MCF 10A (cell line): ENCODE measurements at regions of chr16 and their contacts with region 1.

Region 1: DNA sequence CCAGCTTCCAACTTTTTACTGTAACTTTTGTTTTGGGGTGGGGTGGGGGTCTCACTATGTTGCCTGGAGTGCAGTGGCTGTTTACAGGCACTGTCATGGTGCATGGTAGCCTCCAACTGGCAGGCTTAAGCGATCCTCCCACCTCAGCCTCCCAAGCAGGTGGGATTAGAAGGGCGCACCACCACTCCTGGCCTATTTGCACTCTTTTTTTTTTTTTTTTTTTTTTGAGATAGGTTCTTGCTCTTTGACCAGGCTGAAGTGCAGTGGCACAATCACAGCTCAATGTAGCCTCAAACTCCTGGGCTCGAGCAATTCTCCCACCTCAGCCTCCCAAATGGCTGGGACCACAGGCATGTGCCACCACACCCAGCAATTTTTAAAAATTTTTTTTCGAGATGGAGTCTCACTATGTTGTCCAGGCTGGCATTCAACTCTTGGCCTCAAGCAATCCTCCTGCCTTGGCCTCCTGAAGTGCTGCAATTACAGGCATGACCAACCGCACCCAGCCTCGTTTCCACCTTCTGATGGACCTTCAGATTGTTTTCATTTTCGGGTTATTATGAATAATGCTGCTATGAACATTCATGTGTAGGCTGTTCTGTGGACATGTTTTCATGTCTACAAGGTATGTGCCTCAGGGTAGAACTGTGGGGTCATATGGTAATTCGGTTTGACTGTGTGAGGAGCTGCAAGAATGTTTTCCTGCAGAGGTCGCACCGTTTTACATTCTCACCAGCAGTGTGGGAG is 10.9 kb downstream of the TRAP1 start:
- DNase-seq: no peak
- H3K4me3 Mint-ChIP-seq: no peak overlapping the region
- H3K27ac Mint-ChIP-seq: no peak overlapping the region
- H3K4me1 Mint-ChIP-seq: no peaks in the 10 kb centered on the region
- H3K27me3 Mint-ChIP-seq: no peaks in the 10 kb centered on the region
- CTCF ChIP-seq: no peak

Region 2: DNA sequence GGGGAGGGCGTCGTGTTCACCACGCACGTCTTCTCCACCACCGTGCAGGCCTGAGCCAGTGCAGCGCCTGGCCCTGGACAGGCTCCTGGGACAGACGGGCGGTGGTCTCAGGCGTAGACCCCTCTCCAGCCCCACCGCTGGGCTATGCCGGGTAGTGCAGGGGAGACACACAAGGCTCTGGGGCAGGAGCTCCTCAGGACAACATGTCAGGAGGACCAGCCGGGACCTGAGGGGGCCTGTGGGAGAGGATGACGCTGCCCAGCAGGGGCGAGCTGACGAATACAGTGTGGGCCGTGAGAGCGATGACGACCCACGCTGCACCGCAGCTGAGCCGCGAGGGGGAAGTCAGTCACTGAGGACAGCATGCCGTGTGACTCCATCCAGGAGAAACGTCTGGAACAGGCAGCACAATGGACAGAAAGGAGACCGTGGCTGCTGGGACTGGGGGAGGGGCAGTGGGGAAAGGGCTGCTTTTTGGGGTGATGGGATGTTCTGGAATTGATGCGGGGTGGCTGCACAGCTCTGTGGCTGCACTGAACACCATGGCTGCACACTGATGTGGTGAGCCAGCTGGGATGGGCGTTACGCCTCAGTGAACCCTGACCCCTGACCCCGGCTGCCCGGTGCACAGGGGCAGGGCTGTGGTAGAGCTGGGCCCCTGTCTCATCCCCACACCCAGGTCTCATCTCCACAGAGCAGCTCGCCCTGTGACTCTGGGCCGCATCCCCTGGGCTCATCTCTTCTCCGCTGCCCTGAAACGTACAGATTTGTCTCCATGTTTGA is 31.7 kb before region 1 on chr16:
- CTCF ChIA-PET with region 1: no interaction called
- POLR2A ChIA-PET with region 1: no interaction called
- intact Hi-C with region 1: no loop called
- DNase-seq: no peak
- H3K4me3 Mint-ChIP-seq: no peak overlapping the region
- H3K27ac Mint-ChIP-seq: peak overlapping the region; percentile 69
- H3K4me1 Mint-ChIP-seq: no peaks in the 10 kb centered on the region
- H3K27me3 Mint-ChIP-seq: no peaks in the 10 kb centered on the region
- CTCF ChIP-seq: no peak

Region 3: DNA sequence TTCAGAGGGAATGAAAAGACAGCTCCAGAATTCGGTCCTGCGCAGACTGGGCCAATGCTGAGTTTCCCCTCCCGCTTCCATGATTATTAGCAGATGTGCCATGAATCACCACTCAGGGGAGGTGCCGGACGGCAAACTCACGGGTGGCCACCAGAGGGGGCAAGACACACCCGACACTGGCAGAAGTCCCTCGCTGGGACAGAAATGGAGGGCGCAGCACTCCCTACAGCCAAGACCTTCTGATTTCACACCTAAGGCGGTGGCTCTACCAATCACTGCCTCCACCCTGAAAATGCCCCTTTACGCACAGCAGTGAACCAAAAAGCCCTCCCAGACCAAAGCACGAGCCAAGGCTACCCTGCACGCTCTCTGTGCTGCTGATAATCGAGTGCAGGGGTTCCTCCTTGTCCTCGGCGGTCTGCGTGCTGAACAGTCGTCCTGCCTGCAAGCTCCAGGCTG is 15.9 kb before region 1 on chr16:
- CTCF ChIA-PET with region 1: interaction called, 10 read pairs
- POLR2A ChIA-PET with region 1: no interaction called
- intact Hi-C with region 1: no loop called
- DNase-seq: peak; percentile 83
- H3K4me3 Mint-ChIP-seq: peak overlapping the region; percentile 43
- H3K27ac Mint-ChIP-seq: peak overlapping the region; percentile 66
- H3K4me1 Mint-ChIP-seq: peaks cover 8% of the 10 kb centered on the region
- H3K27me3 Mint-ChIP-seq: no peaks in the 10 kb centered on the region
- CTCF ChIP-seq: peak; percentile 87

Region 4: DNA sequence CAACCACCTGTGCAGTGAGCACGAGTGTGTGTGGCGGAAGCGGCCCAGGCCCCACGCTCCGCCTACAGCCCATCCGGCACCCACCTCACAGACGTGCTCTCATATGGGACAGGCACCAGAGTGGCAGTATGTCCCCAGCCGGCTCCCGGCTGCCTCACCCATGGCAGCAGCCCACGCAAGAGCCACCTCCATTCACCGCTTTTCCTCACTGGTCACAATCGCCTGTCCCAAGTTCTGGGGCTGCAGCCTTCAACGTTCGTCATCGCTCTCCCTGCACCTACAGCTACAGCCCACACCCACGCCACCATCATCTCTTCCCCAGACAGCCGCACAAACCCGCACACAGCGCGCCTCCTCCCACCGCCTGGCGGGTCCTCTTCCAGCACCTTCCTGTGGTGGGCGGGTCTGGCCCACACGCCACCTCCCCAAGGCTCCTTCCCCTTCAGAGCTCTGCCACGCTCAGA is 28.4 kb after region 1 on chr16:
- CTCF ChIA-PET with region 1: no interaction called
- POLR2A ChIA-PET with region 1: no interaction called
- intact Hi-C with region 1: no loop called
- DNase-seq: no peak
- H3K4me3 Mint-ChIP-seq: no peak overlapping the region
- H3K27ac Mint-ChIP-seq: no peak overlapping the region
- H3K4me1 Mint-ChIP-seq: no peaks in the 10 kb centered on the region
- H3K27me3 Mint-ChIP-seq: no peaks in the 10 kb centered on the region
- CTCF ChIP-seq: no peak